ENCODE measurements at regions of chr1 and their contacts with region 1.

Region 1: DNA sequence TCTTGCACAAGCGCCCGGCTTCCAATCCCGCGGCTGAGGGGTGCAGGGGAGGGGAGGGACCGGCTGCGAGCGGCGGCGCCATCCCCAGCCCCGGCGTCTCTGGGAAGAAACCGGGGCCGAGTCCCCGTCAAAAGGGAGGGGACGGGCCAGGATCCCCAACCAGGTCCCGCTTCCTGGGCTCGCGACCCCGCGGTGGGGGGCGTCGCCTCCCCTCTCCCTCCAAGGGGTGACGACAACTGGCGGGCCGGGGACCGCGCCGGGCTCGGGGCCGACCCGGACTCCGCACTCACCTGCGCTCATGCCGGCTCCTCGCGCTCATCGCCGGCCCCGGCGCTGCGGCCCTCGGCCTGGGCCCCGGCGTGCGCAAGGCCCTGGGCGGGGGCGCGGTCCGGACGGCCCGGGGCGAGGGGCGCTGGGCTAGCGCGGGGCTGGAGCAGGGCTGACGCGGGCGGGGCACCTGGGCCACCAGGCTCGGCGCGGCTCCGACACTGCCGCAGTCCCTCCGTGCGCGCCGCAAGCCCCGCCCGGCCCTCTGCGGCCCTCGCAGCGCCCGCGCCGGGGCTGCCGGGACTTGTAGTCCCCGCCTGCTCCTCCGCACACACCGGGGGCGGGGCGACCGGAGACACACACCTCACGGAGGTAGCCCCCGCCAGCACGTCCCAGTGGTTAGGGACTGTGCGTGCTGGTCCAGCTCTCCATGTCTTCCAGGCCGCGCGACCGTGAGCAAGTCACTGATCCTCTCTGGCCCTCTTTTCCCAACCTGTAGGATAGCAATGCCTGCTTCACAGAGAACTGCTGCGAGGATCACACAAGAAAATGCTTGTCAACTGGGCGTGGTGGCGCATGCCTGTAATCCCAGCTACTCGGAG is at the start of gene ATP13A2:
- DNase-seq: peak; percentile 65 to 82 (median 75)
- H3K4me3 ChIP-seq: peak within 1 kb of the TSS; percentile 27 to 87 (median 77)
- H3K27ac ChIP-seq: no peak within 1 kb of the TSS
- H3K4me1 ChIP-seq: peaks cover 9 to 60% (median 55%) of the 10 kb centered on the region in 4 experiments
- H3K27me3 ChIP-seq: no peaks in the 10 kb centered on the region

Region 2: DNA sequence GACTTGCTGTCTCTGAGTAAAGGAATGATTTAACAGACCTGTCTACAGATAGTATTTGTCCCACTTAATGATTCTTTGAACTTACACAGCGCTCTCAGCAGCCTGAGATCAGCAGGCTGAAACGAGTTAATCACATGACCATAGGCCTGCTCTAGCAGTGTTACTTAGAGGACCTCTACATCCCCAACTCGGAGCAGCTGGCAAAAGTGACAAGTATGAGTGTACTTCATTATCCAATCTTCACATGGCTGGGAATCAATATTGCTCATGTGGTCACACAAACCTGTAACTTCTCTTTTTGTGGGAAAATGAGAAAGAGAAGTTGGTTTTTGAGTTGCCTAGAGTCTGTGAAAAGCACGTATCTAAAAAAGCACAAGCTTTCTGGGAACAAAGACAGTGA is 11.4 kb after region 1 on chr1:
- CTCF ChIA-PET with region 1: interaction called, 14 read pairs
- POLR2A ChIA-PET with region 1: interaction called, 4 read pairs
- DNase-seq: peak in 2 of 3 donors; percentile 43 to 50
- H3K4me3 ChIP-seq: no peak overlapping the region
- H3K27ac ChIP-seq: no peak overlapping the region
- H3K4me1 ChIP-seq: peaks cover 0 to 25% (median 14%) of the 10 kb centered on the region in 4 experiments
- H3K27me3 ChIP-seq: no peaks in the 10 kb centered on the region

Region 3: GRCh38 chr1:17089506-17089905 is 77.8 kb after region 1 on chr1:
- CTCF ChIA-PET with region 1: no interaction called
- POLR2A ChIA-PET with region 1: no interaction called
- DNase-seq: no peak
- H3K4me3 ChIP-seq: no peak overlapping the region
- H3K27ac ChIP-seq: no peak overlapping the region
- H3K4me1 ChIP-seq: peaks cover 0 to 7% (median 4%) of the 10 kb centered on the region in 4 experiments
- H3K27me3 ChIP-seq: peaks cover 0 to 4% (median 0%) of the 10 kb centered on the region in 5 experiments

Region 4: DNA sequence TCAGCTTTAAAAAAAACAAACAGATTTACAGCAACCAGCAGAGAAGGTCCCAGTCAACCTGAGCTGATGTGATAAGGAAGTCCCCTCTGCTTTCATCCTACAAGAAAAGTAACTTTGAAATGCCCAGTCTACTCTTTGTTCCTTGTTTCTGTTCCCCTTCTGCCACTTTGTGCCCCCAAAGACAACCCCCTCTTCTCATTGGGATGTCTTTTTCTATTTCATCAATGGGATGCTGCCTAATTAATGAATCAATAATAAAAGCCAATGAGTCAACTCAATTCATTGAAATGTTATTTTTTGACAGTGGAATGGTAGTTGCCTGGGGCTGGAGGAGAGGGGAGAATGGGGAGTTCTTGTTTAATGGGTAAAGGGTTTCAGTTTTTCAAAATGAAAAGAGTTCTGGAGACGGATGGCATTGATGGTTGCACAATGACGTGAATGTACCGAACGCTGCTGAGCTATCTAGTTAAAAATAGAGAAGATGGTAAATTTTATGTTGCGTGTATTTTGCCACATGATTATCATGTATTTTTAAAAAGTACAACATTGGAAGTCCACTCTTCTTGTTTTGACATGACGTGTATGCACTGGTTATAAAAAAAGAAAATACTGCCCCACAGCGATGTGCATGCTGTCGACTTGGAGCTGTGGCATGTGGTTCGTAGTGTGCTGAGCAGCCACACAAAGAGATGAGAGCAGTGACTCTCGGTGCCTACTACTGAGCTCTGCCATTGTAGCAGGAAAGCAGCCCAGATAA is 129.9 kb after region 1 on chr1:
- CTCF ChIA-PET with region 1: no interaction called
- POLR2A ChIA-PET with region 1: no interaction called
- DNase-seq: no peak
- H3K4me3 ChIP-seq: no peak overlapping the region
- H3K27ac ChIP-seq: no peak overlapping the region
- H3K4me1 ChIP-seq: no peaks in the 10 kb centered on the region
- H3K27me3 ChIP-seq: no peaks in the 10 kb centered on the region

Measured in common myeloid progenitor, CD34-positive (primary cell).